ENCODE measurements at regions of chr7 and their contacts with region 1.

Region 1: DNA sequence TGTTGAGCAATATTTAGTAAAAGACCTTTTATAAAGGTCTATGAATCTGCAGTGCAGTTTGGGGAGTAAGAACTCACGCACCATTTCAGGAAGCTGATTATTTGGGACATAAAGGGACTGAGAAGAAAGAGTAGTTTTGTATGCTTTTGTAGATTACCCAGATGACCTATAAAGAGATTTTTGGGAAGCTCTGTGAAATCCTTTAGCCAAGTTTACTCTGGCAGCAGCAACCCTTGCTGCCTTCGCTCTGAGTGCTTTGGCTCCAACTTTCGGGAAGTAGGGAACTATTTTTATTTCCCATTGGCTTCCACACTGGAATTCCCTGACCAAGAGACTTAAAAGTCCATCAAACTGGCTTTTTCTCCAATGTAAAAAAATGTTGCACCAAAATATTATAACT is 1110.1 kb upstream of the PHF14 start:
- DNase-seq: no peak

Region 2: GRCh38 chr7:9691286-9691685 is 172.3 kb before region 1 on chr7:
- intact Hi-C with region 1: no loop called
- DNase-seq: no peak

Region 3: GRCh38 chr7:9835199-9835598 is 28.3 kb before region 1 on chr7:
- intact Hi-C with region 1: loop called in 1 of 2 experiments (anchors 2 kb)
- DNase-seq: no peak